ENCODE measurements at regions of chr3 and their contacts with region 1.

Region 1: GRCh38 chr3:101381809-101382208 is 61.4 kb upstream of the IMPG2 start:
- DNase-seq: no peak
- H3K4me3 Mint-ChIP-seq: no peak overlapping the region
- H3K27ac Mint-ChIP-seq: no peak overlapping the region
- H3K4me1 Mint-ChIP-seq: peaks cover 36% of the 10 kb centered on the region
- H3K27me3 Mint-ChIP-seq: peaks cover 2% of the 10 kb centered on the region

Region 2: DNA sequence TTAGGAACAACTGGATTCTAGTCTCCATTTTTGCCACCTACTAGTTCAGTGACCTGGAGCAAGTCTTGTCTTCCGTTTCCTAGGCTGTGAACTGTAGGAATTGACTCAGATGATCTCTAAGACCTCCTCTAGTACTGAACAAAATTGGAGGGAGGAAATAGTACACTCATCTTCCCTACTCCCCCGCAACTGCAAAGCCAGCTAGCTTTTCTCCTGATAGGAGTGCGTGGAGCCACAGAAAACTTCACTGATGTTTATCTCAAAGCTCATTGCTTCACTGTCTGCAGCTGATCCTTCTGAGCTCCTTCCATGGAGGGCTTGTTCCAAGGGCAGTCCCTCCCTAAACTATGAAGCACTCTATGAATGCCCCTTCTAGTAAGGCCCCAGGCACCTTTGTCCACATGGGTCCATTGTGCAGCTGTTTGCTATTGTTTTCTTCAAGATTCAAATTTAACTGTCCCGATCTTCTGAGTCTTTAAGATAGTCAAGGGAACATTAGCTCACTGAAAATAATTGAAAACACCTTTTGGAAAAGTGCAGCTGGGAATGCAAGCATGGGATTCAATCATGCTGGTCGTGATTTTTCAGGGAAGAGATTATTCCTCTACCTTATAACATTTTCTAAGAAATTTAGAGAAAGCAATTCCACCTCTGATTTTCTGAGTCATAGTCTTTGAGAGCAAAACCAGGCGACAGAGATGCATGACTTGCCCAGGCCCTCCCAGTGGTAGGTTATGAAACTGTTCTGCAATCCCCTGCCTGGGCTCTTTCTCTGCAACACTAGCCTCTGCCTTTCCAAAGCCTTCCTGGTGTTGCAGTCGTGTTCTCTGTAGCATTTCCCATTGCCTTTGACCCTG is 1291.8 kb before region 1 on chr3:
- intact Hi-C with region 1: loop called (anchors 5 kb)
- DNase-seq: no peak
- H3K4me3 Mint-ChIP-seq: peak overlapping the region; percentile 0
- H3K27ac Mint-ChIP-seq: peak overlapping the region; percentile 60
- H3K4me1 Mint-ChIP-seq: peaks cover 49% of the 10 kb centered on the region
- H3K27me3 Mint-ChIP-seq: peaks cover 3% of the 10 kb centered on the region

Region 3: DNA sequence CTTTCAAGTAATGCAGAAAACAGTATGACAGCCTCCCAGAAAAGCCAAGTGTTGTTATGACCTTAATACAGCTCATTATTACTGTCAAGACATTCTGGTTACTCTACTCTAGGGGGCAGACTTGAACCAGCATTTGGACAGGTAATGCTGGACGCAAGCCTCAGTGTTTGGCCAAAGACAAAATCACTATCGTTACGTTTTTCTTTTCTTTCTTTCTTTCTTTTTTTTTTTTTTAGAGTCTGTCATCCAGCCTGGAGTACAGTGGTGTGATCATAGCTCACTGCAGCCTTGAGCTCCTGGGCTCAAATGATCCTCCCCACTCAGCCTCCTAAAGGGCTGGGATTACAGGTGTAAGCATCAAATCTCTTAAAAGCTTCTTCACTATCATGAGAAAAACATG is 918.8 kb before region 1 on chr3:
- intact Hi-C with region 1: loop called (anchors 1 kb)
- DNase-seq: no peak
- H3K4me3 Mint-ChIP-seq: no peak overlapping the region
- H3K27ac Mint-ChIP-seq: no peak overlapping the region
- H3K4me1 Mint-ChIP-seq: peaks cover 11% of the 10 kb centered on the region
- H3K27me3 Mint-ChIP-seq: peaks cover 2% of the 10 kb centered on the region

Region 4: GRCh38 chr3:100650651-100651611 is 730.9 kb before region 1 on chr3:
- intact Hi-C with region 1: loop called (anchors 2 kb)
- DNase-seq: no peak
- H3K4me3 Mint-ChIP-seq: peak overlapping the region; percentile 7
- H3K27ac Mint-ChIP-seq: peak overlapping the region; percentile 32
- H3K4me1 Mint-ChIP-seq: peaks cover 13% of the 10 kb centered on the region
- H3K27me3 Mint-ChIP-seq: no peaks in the 10 kb centered on the region

Region 5: GRCh38 chr3:100737334-100737733 is 644.5 kb before region 1 on chr3:
- intact Hi-C with region 1: loop called (anchors 1 kb)
- DNase-seq: no peak
- H3K4me3 Mint-ChIP-seq: no peak overlapping the region
- H3K27ac Mint-ChIP-seq: no peak overlapping the region
- H3K4me1 Mint-ChIP-seq: peaks cover 32% of the 10 kb centered on the region
- H3K27me3 Mint-ChIP-seq: no peaks in the 10 kb centered on the region

Region 6: GRCh38 chr3:101512646-101513418 is 131.0 kb after region 1 on chr3 and contains the start of gene SENP7:
- intact Hi-C with region 1: loop called (anchors 1 kb)
- DNase-seq: peak; percentile 72
- H3K4me3 Mint-ChIP-seq: peak within 1 kb of the TSS; percentile 94
- H3K27ac Mint-ChIP-seq: peak within 1 kb of the TSS; percentile 95
- H3K4me1 Mint-ChIP-seq: peaks cover 31% of the 10 kb centered on the region
- H3K27me3 Mint-ChIP-seq: no peaks in the 10 kb centered on the region
- total RNA-seq, gene SENP7: 9.1 and 10.7 TPM in 2 replicates

Region 7: DNA sequence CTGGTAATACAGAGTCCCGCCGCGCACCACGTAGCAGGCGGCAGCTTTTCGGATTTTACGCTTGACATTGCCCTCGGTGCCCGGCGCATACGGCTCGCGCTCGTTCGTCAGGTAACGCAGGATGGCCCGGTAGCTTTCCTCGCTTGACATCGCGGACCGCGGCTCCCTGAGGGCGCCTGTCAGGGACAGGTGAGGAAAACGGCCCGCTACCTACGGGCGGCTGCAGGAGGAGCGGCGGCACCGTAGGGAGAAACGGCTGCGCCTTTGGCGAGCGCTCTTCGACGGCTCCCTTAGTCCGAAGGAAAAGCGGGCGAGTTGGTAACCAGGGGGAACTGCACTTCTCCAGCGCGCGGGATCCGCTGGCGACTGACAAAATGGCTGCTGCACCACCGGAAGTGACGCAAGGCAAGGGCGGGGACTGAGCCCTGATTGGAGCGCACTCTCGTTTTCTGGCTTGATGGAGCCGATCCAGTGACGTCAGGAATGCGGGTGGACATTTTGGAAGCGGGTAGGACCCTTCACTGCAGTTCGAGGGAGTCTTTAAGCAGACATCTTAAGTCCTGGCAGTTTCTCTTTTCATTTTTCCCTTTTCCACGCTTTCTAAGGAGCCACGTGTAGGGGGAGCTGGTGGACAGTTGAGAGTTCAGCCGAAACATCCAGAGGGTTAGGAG is 295.1 kb after region 1 on chr3 and contains the start of gene ZBTB11:
- intact Hi-C with region 1: loop called (anchors 5 kb)
- DNase-seq: peak; percentile 99
- H3K4me3 Mint-ChIP-seq: peak within 1 kb of the TSS; percentile 96
- H3K27ac Mint-ChIP-seq: peak within 1 kb of the TSS; percentile 97
- H3K4me1 Mint-ChIP-seq: peaks cover 56% of the 10 kb centered on the region
- H3K27me3 Mint-ChIP-seq: no peaks in the 10 kb centered on the region
- total RNA-seq, gene ZBTB11: 29.0 and 31.9 TPM in 2 replicates

Measured in activated T-helper 1 cell treated with anti-CD3 and anti-CD28 coated beads, Interleukin-12 subunit alpha, Interleukin-12 subunit beta, Interleukin-2, Interleukin-4 antibody, amounts not matched to agents 30 ng/mL and 10 ng/mL and 1 ng/mL, durations not matched to agents 14 hours and 24 hours and 36 hours (primary cell).